ENCODE measurements at regions of chr10 and their contacts with region 1.

Region 1: GRCh38 chr10:12902135-12902572 is 99.4 kb downstream of the CCDC3 start:
- DNase-seq: peak; percentile 68
- ATAC-seq: peak; percentile 71
- H3K4me3 Mint-ChIP-seq: no peak overlapping the region
- H3K27ac Mint-ChIP-seq: 0 out of 2 replicates have a peak overlapping the region, but pooled peaks have one; percentile 3
- H3K4me1 Mint-ChIP-seq: peaks cover 11% of the 10 kb centered on the region
- H3K27me3 Mint-ChIP-seq: no peaks in the 10 kb centered on the region; the same call in 1 of the 2 replicates
- CTCF ChIP-seq: peak; percentile 64

Region 2: GRCh38 chr10:12726971-12727831 is 175.0 kb before region 1 on chr10:
- CTCF ChIA-PET with region 1: interaction called, 14 read pairs
- POLR2A ChIA-PET with region 1: no interaction called
- DNase-seq: no peak
- ATAC-seq: no peak
- H3K4me3 Mint-ChIP-seq: no peak overlapping the region
- H3K27ac Mint-ChIP-seq: no peak overlapping the region
- H3K4me1 Mint-ChIP-seq: peaks cover 12% of the 10 kb centered on the region
- H3K27me3 Mint-ChIP-seq: no peaks in the 10 kb centered on the region
- CTCF ChIP-seq: no peak

Region 3: DNA sequence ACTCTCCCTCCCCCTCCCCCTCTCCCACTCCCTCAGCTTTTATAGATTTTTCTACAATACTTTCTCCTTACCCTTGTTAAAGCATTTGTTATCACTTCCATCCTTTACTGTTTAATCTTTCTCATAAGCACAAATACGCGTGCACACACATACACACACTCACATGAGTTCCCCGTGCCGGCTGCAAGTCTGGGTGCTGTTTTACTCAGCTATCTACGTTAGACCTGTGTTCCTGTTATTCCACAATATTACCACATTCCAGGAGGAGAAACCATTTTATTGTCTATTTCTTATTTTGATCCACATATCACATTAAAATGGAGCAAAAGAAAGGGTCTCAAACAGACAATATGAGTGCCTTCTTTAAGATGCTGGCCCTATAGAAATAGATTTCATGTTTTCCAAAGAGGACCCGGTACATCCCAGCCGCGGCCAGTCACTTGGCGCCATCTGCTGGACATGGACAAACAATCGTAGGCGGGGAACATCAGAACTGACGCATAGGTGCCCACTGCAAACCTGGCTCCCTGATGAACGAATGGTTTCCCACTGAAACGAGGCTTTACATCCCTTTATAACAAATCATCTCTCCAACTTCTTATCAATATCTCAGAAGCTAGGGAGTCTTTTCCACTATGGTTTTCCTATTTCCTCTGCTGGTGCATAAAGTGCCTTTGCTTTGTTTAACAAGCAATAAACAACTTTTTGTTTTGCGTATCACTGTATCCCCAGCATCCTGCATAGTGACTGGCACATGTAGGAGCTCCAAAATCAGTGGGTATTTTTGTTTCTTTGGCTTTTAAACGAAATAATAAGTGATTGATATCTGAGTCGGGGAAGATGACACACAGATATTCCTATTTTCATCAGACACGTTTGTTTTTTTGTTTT is 172.7 kb after region 1 on chr10:
- CTCF ChIA-PET with region 1: interaction called, 20 read pairs
- POLR2A ChIA-PET with region 1: no interaction called
- DNase-seq: peak; percentile 79
- ATAC-seq: peak; percentile 93
- H3K4me3 Mint-ChIP-seq: no peak overlapping the region
- H3K27ac Mint-ChIP-seq: no peak overlapping the region
- H3K4me1 Mint-ChIP-seq: peaks cover 10% of the 10 kb centered on the region
- H3K27me3 Mint-ChIP-seq: no peaks in the 10 kb centered on the region
- CTCF ChIP-seq: peak; percentile 79

Measured in WTC11 (cell line).